HepG2 (cell line): ENCODE measurements at regions of chr5 and their contacts with region 1.

Region 1: DNA sequence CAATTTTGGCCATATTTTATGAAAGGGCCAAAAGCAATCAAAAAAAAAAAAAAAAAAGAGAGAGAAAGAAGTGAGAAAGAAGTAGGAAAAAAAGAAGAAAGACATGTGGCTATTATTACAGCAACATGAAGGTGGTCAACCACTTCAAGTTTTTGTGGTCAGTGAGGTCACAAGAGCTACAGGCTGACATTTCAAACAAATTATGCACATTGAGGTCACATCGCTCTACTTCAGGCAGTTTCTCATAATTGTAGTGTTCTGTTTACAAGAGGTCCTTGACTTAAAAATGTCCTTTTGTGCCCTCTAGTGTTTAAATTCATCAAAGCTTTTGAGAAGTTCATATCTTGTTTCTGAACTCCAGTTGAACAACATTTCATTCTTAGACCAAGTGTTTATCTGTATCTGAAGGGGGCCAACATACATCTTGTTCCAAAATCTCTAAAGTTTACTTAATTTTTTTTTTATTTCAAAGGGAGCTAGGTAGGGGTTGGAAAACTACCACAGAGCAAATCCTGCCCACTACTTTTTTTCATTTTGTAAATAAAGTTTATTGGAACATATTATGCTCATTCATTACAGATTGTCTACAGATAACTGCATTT is 513.1 kb downstream of the PDE4D start:
- DNase-seq: peak; percentile 50
- ATAC-seq: peak; percentile 62; the same call in 2 of the 3 replicates
- H3K4me3 ChIP-seq: no peak overlapping the region
- H3K27ac ChIP-seq: no peak overlapping the region
- H3K4me1 ChIP-seq: no peaks in the 10 kb centered on the region
- H3K27me3 ChIP-seq: no peaks in the 10 kb centered on the region
- CTCF ChIP-seq: peak; percentile 68
- EP300 ChIP-seq: no peak
- POLR2A ChIP-seq: no peak
- RAD21 ChIP-seq: no peak

Region 2: DNA sequence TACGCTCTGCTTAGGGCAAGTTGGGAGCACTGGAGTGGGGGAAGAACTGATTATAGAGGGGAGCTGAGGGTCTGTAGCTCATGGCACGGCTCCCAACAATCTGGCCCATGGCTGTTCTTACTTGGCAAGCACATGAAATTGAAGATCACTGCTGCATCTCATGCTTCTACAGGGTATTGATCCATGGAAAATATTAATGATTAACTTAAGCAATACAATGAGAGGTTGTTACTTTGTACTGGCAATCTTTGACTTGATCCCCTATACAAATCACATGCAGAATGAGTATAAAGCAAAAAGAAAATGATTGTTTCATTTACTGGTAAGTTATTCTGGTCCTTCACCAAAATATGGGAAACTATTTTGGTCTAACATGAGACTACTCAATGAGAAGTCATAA is 32.0 kb after region 1 on chr5:
- CTCF ChIA-PET with region 1: no interaction called
- POLR2A ChIA-PET with region 1: no interaction called
- in situ Hi-C with region 1: no loop called
- intact Hi-C with region 1: no loop called
- DNase-seq: no peak
- ATAC-seq: peak; percentile 47; the same call in 2 of the 3 replicates
- H3K4me3 ChIP-seq: no peak overlapping the region
- H3K27ac ChIP-seq: no peak overlapping the region
- H3K4me1 ChIP-seq: no peaks in the 10 kb centered on the region
- H3K27me3 ChIP-seq: no peaks in the 10 kb centered on the region
- CTCF ChIP-seq: no peak
- EP300 ChIP-seq: no peak
- POLR2A ChIP-seq: no peak
- RAD21 ChIP-seq: no peak

Region 3: DNA sequence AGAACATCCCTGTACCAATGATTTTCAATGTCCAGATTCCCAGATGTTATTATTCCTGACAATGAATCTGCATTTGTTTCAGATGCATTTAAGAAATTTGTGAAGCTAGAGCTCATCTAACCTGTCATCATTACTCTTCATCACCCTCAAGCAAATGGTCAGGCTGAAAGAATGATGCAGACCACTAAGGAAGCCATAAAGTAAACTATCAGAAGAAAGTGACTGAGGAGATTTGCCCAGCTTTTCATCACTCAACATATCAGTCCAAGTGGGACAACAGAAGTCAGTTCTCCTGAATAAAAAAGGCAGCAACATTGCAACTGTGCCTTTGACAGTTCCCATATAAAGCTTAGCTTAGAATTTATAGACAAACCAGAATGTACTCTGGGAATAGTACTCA is 93.2 kb after region 1 on chr5:
- CTCF ChIA-PET with region 1: no interaction called
- POLR2A ChIA-PET with region 1: no interaction called
- in situ Hi-C with region 1: no loop called
- intact Hi-C with region 1: no loop called
- DNase-seq: no peak
- ATAC-seq: no peak
- H3K4me3 ChIP-seq: no peak overlapping the region
- H3K27ac ChIP-seq: no peak overlapping the region
- H3K4me1 ChIP-seq: no peaks in the 10 kb centered on the region
- H3K27me3 ChIP-seq: no peaks in the 10 kb centered on the region
- CTCF ChIP-seq: no peak
- EP300 ChIP-seq: no peak
- POLR2A ChIP-seq: no peak
- RAD21 ChIP-seq: no peak

Region 4: GRCh38 chr5:59673438-59674058 is 293.1 kb after region 1 on chr5:
- CTCF ChIA-PET with region 1: no interaction called
- POLR2A ChIA-PET with region 1: no interaction called
- in situ Hi-C with region 1: loop called (anchors 25 kb)
- intact Hi-C with region 1: no loop called
- DNase-seq: peak; percentile 16
- ATAC-seq: no peak
- H3K4me3 ChIP-seq: no peak overlapping the region
- H3K27ac ChIP-seq: no peak overlapping the region
- H3K4me1 ChIP-seq: no peaks in the 10 kb centered on the region
- H3K27me3 ChIP-seq: no peaks in the 10 kb centered on the region; a peak in 1 of 5 replicates
- CTCF ChIP-seq: peak; percentile 59
- EP300 ChIP-seq: no peak
- POLR2A ChIP-seq: no peak
- RAD21 ChIP-seq: no peak

Region 5: DNA sequence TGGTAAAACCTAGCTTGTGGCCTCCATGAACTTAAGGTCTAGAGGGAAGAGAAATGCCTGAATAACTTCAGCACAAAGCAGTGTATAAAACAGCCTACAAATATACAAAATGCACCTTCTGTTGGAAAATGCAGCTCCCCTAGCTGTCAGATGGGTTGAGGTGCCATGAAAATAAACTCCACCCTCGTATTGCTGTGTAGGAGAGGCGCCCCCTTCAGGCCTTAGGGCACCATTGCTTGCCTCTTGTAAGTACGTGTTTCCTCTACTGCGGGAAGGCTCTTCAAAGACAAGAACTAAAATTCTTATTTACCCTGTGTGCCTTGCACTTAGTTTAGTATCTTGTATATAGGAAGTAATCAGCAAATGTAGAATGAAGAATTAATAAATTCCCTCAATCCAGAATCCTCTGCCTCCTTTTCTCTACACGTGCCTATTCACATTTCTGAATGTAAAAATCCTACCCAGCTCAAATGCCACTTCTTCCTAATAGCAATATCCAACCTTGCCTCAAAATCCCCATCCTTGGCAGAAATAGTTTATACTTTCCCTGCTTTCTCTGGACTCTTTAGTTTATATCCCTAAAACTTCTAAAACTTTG is 906.8 kb after region 1 on chr5:
- CTCF ChIA-PET with region 1: no interaction called
- POLR2A ChIA-PET with region 1: no interaction called
- in situ Hi-C with region 1: no loop called
- intact Hi-C with region 1: loop called (anchors 10 kb)
- DNase-seq: peak; percentile 69
- ATAC-seq: peak; percentile 89
- H3K4me3 ChIP-seq: no peak overlapping the region
- H3K27ac ChIP-seq: no peak overlapping the region
- H3K4me1 ChIP-seq: peaks cover 14% of the 10 kb centered on the region
- H3K27me3 ChIP-seq: no peaks in the 10 kb centered on the region
- CTCF ChIP-seq: peak; percentile 62
- EP300 ChIP-seq: no peak
- POLR2A ChIP-seq: no peak
- RAD21 ChIP-seq: no peak

Region 6: GRCh38 chr5:60586307-60586901 is 1206.0 kb after region 1 on chr5:
- CTCF ChIA-PET with region 1: no interaction called
- POLR2A ChIA-PET with region 1: no interaction called
- in situ Hi-C with region 1: loop called (anchors 25 kb)
- intact Hi-C with region 1: no loop called
- DNase-seq: peak; percentile 54
- ATAC-seq: 0 out of 3 replicates have a peak, but pooled peaks have one; percentile 30
- H3K4me3 ChIP-seq: no peak overlapping the region
- H3K27ac ChIP-seq: no peak overlapping the region
- H3K4me1 ChIP-seq: peaks cover 12% of the 10 kb centered on the region; the same call in 1 of the 2 replicates
- H3K27me3 ChIP-seq: no peaks in the 10 kb centered on the region
- CTCF ChIP-seq: peak; percentile 67
- EP300 ChIP-seq: no peak
- POLR2A ChIP-seq: no peak
- RAD21 ChIP-seq: peak; percentile 62